Heart left ventricle (tissue), 16 donors: ENCODE measurements at regions of chr18 and their contacts with region 1.

Region 1: GRCh38 chr18:21191596-21192307 is 50.3 kb upstream of the GREB1L start:
- DNase-seq: peak; percentile 23 to 67 (median 60)
- ATAC-seq: peak in 3 of 4 donors; percentile 66 to 78 (median 78)
- H3K4me3 ChIP-seq: no peak overlapping the region
- H3K27ac ChIP-seq: no peak overlapping the region
- H3K4me1 ChIP-seq: no peaks in the 10 kb centered on the region
- H3K27me3 ChIP-seq: peaks cover 0 to 3% (median 0%) of the 10 kb centered on the region in 9 donors
- CTCF ChIP-seq: peak; percentile 24 to 61 (median 42)
- POLR2A ChIP-seq: no peak

Region 2: DNA sequence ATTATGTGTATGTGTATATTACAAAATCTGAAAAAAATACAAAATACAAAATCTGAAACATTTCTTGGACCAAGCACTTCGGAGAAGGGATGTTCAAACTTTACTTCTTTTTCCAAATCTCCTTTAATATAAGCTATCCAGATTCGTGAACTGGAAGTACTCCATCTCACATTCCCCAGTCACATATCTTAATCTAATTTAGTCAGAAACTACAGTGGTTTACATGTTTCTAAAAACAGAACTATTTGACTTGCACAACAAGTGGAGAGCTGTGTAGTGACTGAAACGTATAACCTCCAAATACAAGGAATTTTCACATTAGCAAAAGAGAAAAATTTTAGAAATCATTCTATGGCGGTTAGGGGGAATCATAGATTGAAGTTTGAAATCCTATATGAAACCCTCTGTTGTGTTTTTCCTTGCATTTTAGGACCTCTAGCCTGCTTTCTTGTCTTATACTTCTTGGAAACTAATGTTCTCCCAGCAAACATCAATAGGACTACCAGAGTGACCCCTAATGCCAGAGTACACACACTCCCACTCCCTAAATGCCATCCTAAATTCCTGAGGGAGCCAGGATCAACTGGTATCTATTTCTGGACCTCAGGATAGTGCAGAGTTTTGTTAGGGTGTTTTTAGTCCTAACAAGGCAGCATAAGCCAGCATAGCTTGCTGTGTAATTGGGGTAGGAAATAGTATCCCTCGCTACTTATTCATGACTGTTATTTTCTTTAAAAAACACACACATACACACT is 49.9 kb before region 1 on chr18:
- intact Hi-C with region 1: loop called in 1 of 10 experiments (anchors 5 kb)
- DNase-seq: no peak
- ATAC-seq: no peak
- H3K4me3 ChIP-seq: no peak overlapping the region
- H3K27ac ChIP-seq: no peak overlapping the region
- H3K4me1 ChIP-seq: peaks cover 0 to 9% (median 2%) of the 10 kb centered on the region in 12 donors
- H3K27me3 ChIP-seq: no peaks in the 10 kb centered on the region
- CTCF ChIP-seq: no peak
- POLR2A ChIP-seq: no peak

Region 3: GRCh38 chr18:21298351-21298750 is 106.6 kb after region 1 on chr18:
- intact Hi-C with region 1: loop called in 1 of 10 experiments (anchors 5 kb)
- DNase-seq: no peak
- ATAC-seq: no peak
- H3K4me3 ChIP-seq: no peak overlapping the region
- H3K27ac ChIP-seq: no peak overlapping the region
- H3K4me1 ChIP-seq: no peaks in the 10 kb centered on the region
- H3K27me3 ChIP-seq: peaks cover 0 to 2% (median 0%) of the 10 kb centered on the region in 9 donors
- CTCF ChIP-seq: no peak
- POLR2A ChIP-seq: no peak

Region 4: GRCh38 chr18:21509062-21509461 is 317.3 kb after region 1 on chr18:
- intact Hi-C with region 1: loop called in 1 of 10 experiments (anchors 10 kb)
- DNase-seq: no peak
- ATAC-seq: no peak
- H3K4me3 ChIP-seq: no peak overlapping the region
- H3K27ac ChIP-seq: no peak overlapping the region
- H3K4me1 ChIP-seq: no peaks in the 10 kb centered on the region
- H3K27me3 ChIP-seq: no peaks in the 10 kb centered on the region
- CTCF ChIP-seq: no peak
- POLR2A ChIP-seq: no peak

Region 5: GRCh38 chr18:21851327-21851972 is 659.7 kb after region 1 on chr18:
- intact Hi-C with region 1: loop called in 2 of 10 experiments (anchors 10 kb)
- DNase-seq: no peak
- ATAC-seq: peak in 2 of 4 donors; percentile 45 to 63
- H3K4me3 ChIP-seq: no peak overlapping the region
- H3K27ac ChIP-seq: no peak overlapping the region
- H3K4me1 ChIP-seq: peaks cover 0 to 15% (median 0%) of the 10 kb centered on the region in 12 donors
- H3K27me3 ChIP-seq: no peaks in the 10 kb centered on the region
- CTCF ChIP-seq: peak; percentile 25 to 66 (median 44)
- POLR2A ChIP-seq: no peak